PC-3 (cell line): ENCODE measurements at regions of chr5 and their contacts with region 1.

Region 1: DNA sequence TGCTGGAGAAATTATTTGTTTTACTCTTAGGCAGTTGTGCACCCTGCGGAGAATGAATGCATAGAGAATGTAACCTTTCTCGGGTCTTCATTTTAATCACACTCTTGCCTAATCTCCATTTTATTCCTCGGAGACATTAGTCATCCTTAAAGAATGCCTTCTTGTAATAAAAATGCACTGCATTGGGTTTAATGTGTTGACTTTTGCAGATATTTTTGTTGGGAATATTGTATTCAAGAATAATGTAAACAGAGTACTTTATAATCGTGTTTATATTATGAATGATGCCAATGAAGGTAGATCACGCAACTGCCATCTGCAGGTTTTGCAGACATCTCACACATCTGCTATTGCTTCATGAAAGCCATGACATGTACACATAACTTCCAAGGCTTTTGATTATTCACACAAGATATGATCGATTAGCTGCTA is 1093.8 kb upstream of the CDH6 start:
- DNase-seq: peak; percentile 97
- ATAC-seq: peak; percentile 82
- H3K4me3 ChIP-seq: peak overlapping the region; percentile 7; the same call in 1 of the 2 replicates
- H3K27ac ChIP-seq: peak overlapping the region; percentile 96
- H3K4me1 ChIP-seq: peaks cover 56% of the 10 kb centered on the region
- H3K27me3 ChIP-seq: no peaks in the 10 kb centered on the region
- CTCF ChIP-seq: no peak

Region 2: GRCh38 chr5:29942089-29942488 is 157.6 kb before region 1 on chr5:
- CTCF ChIA-PET with region 1: no interaction called
- POLR2A ChIA-PET with region 1: no interaction called
- intact Hi-C with region 1: loop called (anchors 5 kb)
- DNase-seq: peak; percentile 53
- ATAC-seq: peak; percentile 71
- H3K4me3 ChIP-seq: no peak overlapping the region
- H3K27ac ChIP-seq: peak overlapping the region; percentile 35
- H3K4me1 ChIP-seq: 0 out of 2 replicates have a peak, but pooled peaks cover 16% of the 10 kb centered on the region
- H3K27me3 ChIP-seq: no peaks in the 10 kb centered on the region
- CTCF ChIP-seq: no peak

Region 3: DNA sequence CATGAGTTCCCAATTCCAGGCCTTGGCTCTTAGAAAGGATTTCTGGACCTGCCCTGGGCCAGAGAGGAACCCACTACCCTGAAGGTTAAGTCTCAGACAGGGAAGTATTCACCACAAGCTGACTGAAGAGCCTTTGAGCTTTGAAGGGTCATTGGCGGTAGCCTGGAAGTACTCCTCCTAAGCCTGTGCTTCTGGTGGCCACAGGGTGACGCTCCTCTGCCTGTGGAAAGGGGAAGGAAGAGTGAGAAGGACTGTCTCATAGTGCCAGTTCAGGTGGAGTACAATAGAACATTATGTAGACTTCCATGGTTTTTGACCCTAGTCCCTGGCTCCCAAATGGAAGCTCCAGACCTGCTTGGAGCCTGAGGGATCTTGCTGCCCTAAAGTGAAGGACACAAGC is 139.3 kb before region 1 on chr5:
- CTCF ChIA-PET with region 1: no interaction called
- POLR2A ChIA-PET with region 1: no interaction called
- intact Hi-C with region 1: no loop called
- DNase-seq: no peak
- ATAC-seq: no peak
- H3K4me3 ChIP-seq: no peak overlapping the region
- H3K27ac ChIP-seq: no peak overlapping the region
- H3K4me1 ChIP-seq: no peaks in the 10 kb centered on the region
- H3K27me3 ChIP-seq: no peaks in the 10 kb centered on the region
- CTCF ChIP-seq: no peak

Region 4: GRCh38 chr5:30040488-30041118 is 59.1 kb before region 1 on chr5:
- CTCF ChIA-PET with region 1: interaction called, 5 read pairs
- POLR2A ChIA-PET with region 1: no interaction called
- intact Hi-C with region 1: loop called (anchors 2 kb)
- DNase-seq: peak; percentile 83
- ATAC-seq: peak; percentile 82
- H3K4me3 ChIP-seq: no peak overlapping the region
- H3K27ac ChIP-seq: no peak overlapping the region
- H3K4me1 ChIP-seq: peaks cover 19% of the 10 kb centered on the region
- H3K27me3 ChIP-seq: no peaks in the 10 kb centered on the region
- CTCF ChIP-seq: peak; percentile 91

Region 5: DNA sequence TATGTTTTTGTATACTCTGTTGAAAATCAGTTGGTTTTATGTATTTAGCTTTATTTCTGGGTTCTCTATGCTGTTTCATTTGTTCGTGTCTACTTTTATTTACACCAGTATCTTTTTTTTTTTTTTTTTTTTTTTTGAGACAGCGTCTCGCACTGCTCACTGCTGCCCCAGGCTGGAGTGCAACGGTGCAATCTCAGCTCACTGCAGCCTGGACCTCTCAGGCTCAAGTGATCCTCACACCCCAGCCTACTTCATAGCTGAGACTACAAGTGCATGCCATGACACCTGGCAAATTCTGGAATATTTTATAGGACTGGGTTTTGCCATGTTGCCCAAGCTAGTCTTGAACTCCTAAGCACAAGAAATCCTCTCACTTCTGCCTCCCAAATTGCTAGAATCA is 224.4 kb after region 1 on chr5:
- CTCF ChIA-PET with region 1: no interaction called
- POLR2A ChIA-PET with region 1: no interaction called
- intact Hi-C with region 1: loop called (anchors 5 kb)
- DNase-seq: no peak
- ATAC-seq: no peak
- H3K4me3 ChIP-seq: no peak overlapping the region
- H3K27ac ChIP-seq: no peak overlapping the region
- H3K4me1 ChIP-seq: 0 out of 2 replicates have a peak, but pooled peaks cover 5% of the 10 kb centered on the region
- H3K27me3 ChIP-seq: no peaks in the 10 kb centered on the region
- CTCF ChIP-seq: no peak

Region 6: DNA sequence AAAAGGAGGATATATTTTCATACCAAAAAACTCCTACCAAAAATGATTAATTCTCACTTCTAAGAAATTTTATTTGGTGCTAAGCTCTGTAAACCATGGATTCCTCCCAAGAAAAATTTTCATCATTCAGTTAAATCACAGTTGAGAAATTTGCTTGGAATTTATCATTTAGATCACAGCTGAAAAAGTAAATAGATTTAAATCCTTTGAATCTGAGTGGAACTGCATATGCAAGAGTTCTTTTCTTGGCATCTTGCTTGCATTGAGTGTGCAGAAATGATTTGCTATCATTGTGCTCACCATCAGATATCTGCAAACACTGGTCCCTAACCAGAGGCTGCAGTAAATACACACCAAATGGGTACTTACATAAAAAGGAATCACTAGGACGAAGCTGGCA is 257.7 kb after region 1 on chr5:
- CTCF ChIA-PET with region 1: no interaction called
- POLR2A ChIA-PET with region 1: no interaction called
- intact Hi-C with region 1: loop called (anchors 10 kb)
- DNase-seq: no peak
- ATAC-seq: no peak
- H3K4me3 ChIP-seq: no peak overlapping the region
- H3K27ac ChIP-seq: no peak overlapping the region
- H3K4me1 ChIP-seq: peaks cover 30% of the 10 kb centered on the region
- H3K27me3 ChIP-seq: no peaks in the 10 kb centered on the region
- CTCF ChIP-seq: no peak

Region 7: GRCh38 chr5:30401479-30402058 is 301.9 kb after region 1 on chr5:
- CTCF ChIA-PET with region 1: interaction called, 3 read pairs
- POLR2A ChIA-PET with region 1: no interaction called
- intact Hi-C with region 1: loop called (anchors 2 kb)
- DNase-seq: peak; percentile 70
- ATAC-seq: peak; percentile 66
- H3K4me3 ChIP-seq: peak overlapping the region; percentile 37
- H3K27ac ChIP-seq: no peak overlapping the region
- H3K4me1 ChIP-seq: peaks cover 5% of the 10 kb centered on the region
- H3K27me3 ChIP-seq: no peaks in the 10 kb centered on the region
- CTCF ChIP-seq: peak; percentile 91